ENCODE measurements at regions of chr15 and their contacts with region 1.

Region 1: GRCh38 chr15:78065284-78065872 is 12.1 kb downstream of the TBC1D2B start:
- DNase-seq: peak; percentile 67
- H3K4me3 ChIP-seq: no peak overlapping the region
- H3K27ac ChIP-seq: peak overlapping the region; percentile 73 to 81
- H3K4me1 ChIP-seq: peaks cover 86% of the 10 kb centered on the region
- H3K27me3 ChIP-seq: no peaks in the 10 kb centered on the region
- CTCF ChIP-seq: no peak
- POLR2A ChIP-seq: no peak

Region 2: DNA sequence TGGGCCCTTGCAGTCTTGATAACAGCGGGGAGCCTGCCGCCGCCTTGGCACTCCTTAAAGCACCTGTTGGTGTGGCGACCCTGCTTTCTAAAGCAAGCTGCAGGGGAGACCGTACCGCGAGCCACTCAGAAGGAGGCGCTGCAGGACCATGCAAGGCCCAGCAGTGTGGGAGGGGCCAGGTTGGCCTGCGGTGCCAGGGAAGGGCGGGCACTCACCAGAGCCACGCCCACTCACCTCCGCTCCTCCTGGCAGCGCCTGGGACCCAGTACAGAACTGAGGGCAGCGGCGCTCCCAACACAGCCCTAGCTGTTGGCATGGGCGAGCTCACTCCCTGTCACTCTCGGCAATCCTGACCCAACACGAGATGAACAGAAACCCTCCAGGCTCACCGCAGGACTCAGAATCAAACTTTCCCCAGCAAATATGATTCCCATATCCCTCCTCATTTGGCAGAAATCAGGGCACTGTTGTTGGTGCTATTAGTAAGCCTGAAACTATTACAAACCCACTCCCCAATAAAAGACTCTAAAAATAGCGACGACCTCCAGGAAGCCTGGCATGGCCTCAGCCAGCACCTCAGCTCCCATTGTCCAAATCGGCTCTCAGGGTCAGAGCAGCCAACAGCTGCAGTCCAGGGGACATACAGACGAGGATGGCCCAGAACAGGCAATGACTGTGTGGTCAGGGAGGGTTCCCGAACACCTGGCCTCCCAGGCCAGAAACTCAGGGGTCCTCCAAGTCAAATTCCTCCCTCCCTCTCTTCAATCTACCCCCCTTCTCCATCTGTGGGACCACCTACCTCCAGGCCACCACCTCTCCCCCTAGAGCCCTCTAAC is 65.1 kb before region 1 on chr15:
- intact Hi-C with region 1: loop called (anchors 10 kb)
- DNase-seq: peak; percentile 89
- H3K4me3 ChIP-seq: no peak overlapping the region
- H3K27ac ChIP-seq: no peak overlapping the region
- H3K4me1 ChIP-seq: peaks cover 10% of the 10 kb centered on the region
- H3K27me3 ChIP-seq: no peaks in the 10 kb centered on the region
- CTCF ChIP-seq: peak; percentile 8 to 42 (median 31)
- POLR2A ChIP-seq: no peak

Region 3: DNA sequence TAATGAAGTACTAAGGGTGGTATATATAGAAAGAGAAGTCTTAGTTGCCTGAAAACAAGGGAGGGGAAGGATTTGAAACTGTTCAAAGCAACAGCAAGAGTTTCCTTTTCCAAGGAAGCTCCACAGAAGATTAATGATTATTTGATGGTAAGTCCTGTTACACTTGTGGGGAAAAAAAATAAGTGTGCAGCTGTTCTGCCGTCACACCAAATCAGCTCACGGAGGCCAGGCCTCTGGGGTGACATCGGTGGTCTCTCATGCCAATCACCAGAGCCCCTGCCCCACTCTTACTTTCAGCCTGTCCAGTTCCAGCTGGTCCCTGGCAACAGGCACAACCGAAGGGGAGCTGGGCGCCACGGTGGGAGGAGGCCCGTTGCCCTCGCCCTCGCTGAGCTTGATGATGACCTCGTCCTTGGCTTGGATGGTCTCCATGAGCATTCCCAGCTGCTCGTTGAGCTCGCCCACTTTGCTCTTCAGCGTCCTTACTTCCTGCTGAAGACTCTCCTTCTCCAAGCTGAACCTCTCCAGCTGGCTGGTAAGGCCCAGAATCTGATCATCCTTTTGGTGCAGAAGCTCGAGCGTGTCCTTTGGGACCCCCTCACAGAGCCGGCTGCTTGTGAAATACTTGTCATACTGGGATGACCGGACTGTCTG is 41.4 kb before region 1 on chr15:
- intact Hi-C with region 1: loop called (anchors 2 kb)
- DNase-seq: peak; percentile 52
- H3K4me3 ChIP-seq: no peak overlapping the region
- H3K27ac ChIP-seq: peak overlapping the region in 1 of 2 donors; percentile 24
- H3K4me1 ChIP-seq: peaks cover 23% of the 10 kb centered on the region
- H3K27me3 ChIP-seq: no peaks in the 10 kb centered on the region
- CTCF ChIP-seq: no peak
- POLR2A ChIP-seq: no peak

Region 4: GRCh38 chr15:78120523-78120922 is 55.1 kb after region 1 on chr15:
- intact Hi-C with region 1: no loop called
- DNase-seq: no peak
- H3K4me3 ChIP-seq: no peak overlapping the region
- H3K27ac ChIP-seq: no peak overlapping the region
- H3K4me1 ChIP-seq: no peaks in the 10 kb centered on the region
- H3K27me3 ChIP-seq: no peaks in the 10 kb centered on the region
- CTCF ChIP-seq: no peak
- POLR2A ChIP-seq: no peak

Measured in testis (tissue), 5 donors.